Activated CD4-positive, alpha-beta T cell treated with anti-CD3 and anti-CD28 coated beads for 36 hours (primary cell): ENCODE measurements at regions of chr17 and their contacts with region 1.

Region 1: DNA sequence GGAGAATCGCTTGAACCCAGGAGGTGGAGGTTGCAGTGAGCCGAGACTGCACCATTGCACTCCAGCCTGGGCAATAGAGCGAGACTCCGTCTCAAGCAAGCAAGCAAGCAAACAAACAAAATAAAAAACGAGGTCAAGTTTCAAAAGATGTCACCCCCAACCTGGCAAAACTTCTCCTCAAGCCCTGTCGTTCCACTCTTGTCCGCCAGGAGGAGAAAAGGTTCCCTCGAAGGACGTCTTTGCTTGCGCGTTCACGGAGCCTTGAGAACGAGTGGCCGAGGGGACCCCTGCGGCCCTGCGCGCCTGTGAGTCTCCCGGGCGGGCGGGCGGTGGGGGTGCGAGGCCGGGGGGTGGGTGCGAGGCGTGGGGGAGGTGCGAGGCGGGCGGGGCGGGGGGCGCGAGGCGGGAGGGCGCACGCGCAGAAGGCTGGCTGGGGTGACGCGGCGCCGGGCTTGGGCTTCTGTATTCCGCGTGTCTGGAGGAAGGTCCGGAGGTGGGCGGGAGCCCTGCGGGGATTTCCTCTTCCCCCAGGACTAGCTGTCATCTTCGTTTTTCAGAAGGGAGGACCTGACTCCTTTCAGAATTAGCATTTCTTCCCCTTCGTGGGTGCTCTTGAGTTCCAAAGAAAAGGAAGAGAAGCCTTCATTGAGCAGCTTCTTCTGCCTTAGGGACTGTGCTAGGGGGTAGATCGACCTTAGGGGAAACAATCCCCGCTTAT is 3.7 kb downstream of the SLC52A1 start:
- DNase-seq: peak; percentile 91
- ATAC-seq: peak; percentile 82
- H3K4me3 Mint-ChIP-seq: peak overlapping the region; percentile 68
- H3K27ac Mint-ChIP-seq: peak overlapping the region; percentile 85
- H3K4me1 Mint-ChIP-seq: peaks cover 19% of the 10 kb centered on the region
- H3K27me3 Mint-ChIP-seq: peaks cover 3% of the 10 kb centered on the region

Region 2: GRCh38 chr17:5019475-5019956 is 12.0 kb before region 1 on chr17:
- CTCF ChIA-PET with region 1: interaction called, 10 read pairs
- POLR2A ChIA-PET with region 1: interaction called, 3 read pairs
- intact Hi-C with region 1: no loop called
- DNase-seq: peak; percentile 67
- ATAC-seq: peak; percentile 93
- H3K4me3 Mint-ChIP-seq: no peak overlapping the region
- H3K27ac Mint-ChIP-seq: peak overlapping the region; percentile 56
- H3K4me1 Mint-ChIP-seq: peaks cover 11% of the 10 kb centered on the region
- H3K27me3 Mint-ChIP-seq: no peaks in the 10 kb centered on the region

Region 3: GRCh38 chr17:5049314-5049895 is 17.9 kb after region 1 on chr17:
- CTCF ChIA-PET with region 1: interaction called, 12 read pairs
- POLR2A ChIA-PET with region 1: no interaction called
- intact Hi-C with region 1: no loop called
- DNase-seq: peak; percentile 70
- ATAC-seq: peak; percentile 87
- H3K4me3 Mint-ChIP-seq: no peak overlapping the region
- H3K27ac Mint-ChIP-seq: peak overlapping the region; percentile 81
- H3K4me1 Mint-ChIP-seq: peaks cover 44% of the 10 kb centered on the region
- H3K27me3 Mint-ChIP-seq: no peaks in the 10 kb centered on the region

Region 4: GRCh38 chr17:5055543-5055942 is 24.0 kb after region 1 on chr17:
- CTCF ChIA-PET with region 1: interaction called, 82 read pairs
- POLR2A ChIA-PET with region 1: no interaction called
- intact Hi-C with region 1: no loop called
- DNase-seq: no peak
- ATAC-seq: no peak
- H3K4me3 Mint-ChIP-seq: no peak overlapping the region
- H3K27ac Mint-ChIP-seq: no peak overlapping the region
- H3K4me1 Mint-ChIP-seq: no peaks in the 10 kb centered on the region
- H3K27me3 Mint-ChIP-seq: no peaks in the 10 kb centered on the region

Region 5: GRCh38 chr17:5065227-5065744 is 33.8 kb after region 1 on chr17:
- CTCF ChIA-PET with region 1: interaction called, 82 read pairs
- POLR2A ChIA-PET with region 1: no interaction called
- intact Hi-C with region 1: loop called (anchors 1 kb)
- DNase-seq: no peak
- ATAC-seq: no peak
- H3K4me3 Mint-ChIP-seq: no peak overlapping the region
- H3K27ac Mint-ChIP-seq: no peak overlapping the region
- H3K4me1 Mint-ChIP-seq: peaks cover 3% of the 10 kb centered on the region
- H3K27me3 Mint-ChIP-seq: no peaks in the 10 kb centered on the region

Region 6: GRCh38 chr17:5078106-5079028 is 46.8 kb after region 1 on chr17 and contains the start of gene ZFP3:
- CTCF ChIA-PET with region 1: interaction called, 5 read pairs
- POLR2A ChIA-PET with region 1: no interaction called
- intact Hi-C with region 1: loop called in 1 of 2 experiments (anchors 1 kb)
- DNase-seq: peak; percentile 89
- ATAC-seq: peak; percentile 90
- H3K4me3 Mint-ChIP-seq: peak within 1 kb of the TSS; percentile 73
- H3K27ac Mint-ChIP-seq: peak within 1 kb of the TSS; percentile 95
- H3K4me1 Mint-ChIP-seq: peaks cover 30% of the 10 kb centered on the region
- H3K27me3 Mint-ChIP-seq: no peaks in the 10 kb centered on the region
- total RNA-seq, gene ZFP3: 2.2 to 2.8 TPM

Region 7: GRCh38 chr17:5122586-5123342 is 91.2 kb after region 1 on chr17:
- CTCF ChIA-PET with region 1: no interaction called
- POLR2A ChIA-PET with region 1: no interaction called
- intact Hi-C with region 1: no loop called
- DNase-seq: peak; percentile 24
- ATAC-seq: peak; percentile 61
- H3K4me3 Mint-ChIP-seq: peak overlapping the region; percentile 27
- H3K27ac Mint-ChIP-seq: no peak overlapping the region
- H3K4me1 Mint-ChIP-seq: no peaks in the 10 kb centered on the region
- H3K27me3 Mint-ChIP-seq: peaks cover 41% of the 10 kb centered on the region

Region 8: GRCh38 chr17:5155495-5155894 is 124.0 kb after region 1 on chr17:
- CTCF ChIA-PET with region 1: no interaction called
- POLR2A ChIA-PET with region 1: no interaction called
- intact Hi-C with region 1: no loop called
- DNase-seq: no peak
- ATAC-seq: no peak
- H3K4me3 Mint-ChIP-seq: no peak overlapping the region
- H3K27ac Mint-ChIP-seq: no peak overlapping the region
- H3K4me1 Mint-ChIP-seq: no peaks in the 10 kb centered on the region
- H3K27me3 Mint-ChIP-seq: peaks cover 23% of the 10 kb centered on the region